H1 (cell line): ENCODE measurements at regions of chr1 and their contacts with region 1.

Region 1: DNA sequence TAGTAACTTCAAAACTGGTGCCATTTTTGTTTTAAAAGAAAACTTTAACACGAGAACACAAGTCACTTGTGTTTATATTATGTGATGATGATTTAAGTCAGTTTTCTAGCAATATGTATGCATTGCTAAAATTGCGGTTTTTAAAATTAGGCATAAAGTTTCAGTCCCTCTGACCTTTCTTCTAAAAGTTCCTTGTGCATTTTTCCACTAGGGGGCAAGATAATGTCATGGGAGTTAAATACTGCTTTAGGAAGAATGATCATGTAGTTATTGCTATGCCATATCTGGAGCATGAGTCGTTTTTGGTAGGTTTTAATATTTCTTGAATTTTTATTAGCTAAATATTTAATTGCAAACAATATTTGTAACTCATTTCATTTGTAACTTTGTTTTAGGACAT is 10.7 kb downstream of the CDC7 start:
- DNase-seq: no peak
- H3K4me3 ChIP-seq: no peak overlapping the region
- H3K27ac ChIP-seq: no peak overlapping the region
- H3K4me1 ChIP-seq: no peaks in the 10 kb centered on the region
- H3K27me3 ChIP-seq: no peaks in the 10 kb centered on the region
- CTCF ChIP-seq: peak in 1 of 3 experiments; percentile 28; a peak in 2 of 4 replicates
- EP300 ChIP-seq: no peak
- POLR2A ChIP-seq: no peak
- RAD21 ChIP-seq: peak; percentile 51 to 61

Region 2: DNA sequence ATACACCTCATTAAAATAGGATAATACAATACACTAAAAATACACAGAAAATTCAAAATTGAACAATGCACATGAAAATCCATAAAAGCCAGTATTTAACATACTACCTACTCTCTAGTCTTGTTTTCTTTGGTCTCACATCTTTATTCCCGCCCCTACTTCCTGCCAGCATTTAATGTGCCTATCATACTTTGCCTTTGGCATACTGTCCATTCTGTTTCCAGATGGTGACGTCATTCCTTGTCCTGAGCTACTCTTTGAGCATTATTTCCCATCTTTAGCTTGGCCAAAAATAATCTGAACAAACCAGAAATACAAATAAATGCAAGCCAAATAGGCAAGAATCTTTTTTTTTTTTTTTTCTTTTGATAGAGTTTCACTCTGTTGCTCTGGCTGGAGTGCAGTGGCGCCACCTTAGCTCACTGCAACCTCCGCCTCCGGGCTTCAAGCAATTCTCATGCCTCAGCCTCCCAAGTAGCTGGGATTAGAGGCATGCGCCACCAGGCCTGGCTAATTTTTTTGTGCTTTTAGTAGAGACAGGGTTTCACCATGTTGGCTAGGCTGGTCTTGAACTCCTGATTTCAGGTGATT is 111.2 kb before region 1 on chr1:
- CTCF ChIA-PET with region 1: no interaction called
- POLR2A ChIA-PET with region 1: no interaction called
- DNase-seq: no peak
- H3K4me3 ChIP-seq: no peak overlapping the region
- H3K27ac ChIP-seq: no peak overlapping the region
- H3K4me1 ChIP-seq: no peaks in the 10 kb centered on the region
- H3K27me3 ChIP-seq: no peaks in the 10 kb centered on the region
- CTCF ChIP-seq: peak; percentile 15 to 24 (median 17); a peak in 2 of 4 replicates
- EP300 ChIP-seq: no peak
- POLR2A ChIP-seq: no peak
- RAD21 ChIP-seq: no peak

Region 3: GRCh38 chr1:91500756-91501522 is 10.4 kb before region 1 on chr1 and contains the start of gene CDC7:
- CTCF ChIA-PET with region 1: interaction called, 6 read pairs
- POLR2A ChIA-PET with region 1: interaction called, 17 read pairs
- DNase-seq: peak; percentile 79 to 94
- H3K4me3 ChIP-seq: peak within 1 kb of the TSS; percentile 67 to 82 (median 76)
- H3K27ac ChIP-seq: peak within 1 kb of the TSS; percentile 99
- H3K4me1 ChIP-seq: peaks cover 2 to 14% (median 7%) of the 10 kb centered on the region in 4 experiments; a peak in 6 of 7 replicates
- H3K27me3 ChIP-seq: no peaks in the 10 kb centered on the region
- CTCF ChIP-seq: peak; percentile 35 to 61 (median 57)
- EP300 ChIP-seq: 0 out of 3 replicates have a peak, but pooled peaks of 1 of the 2 experiments have one; percentile 40
- POLR2A ChIP-seq: peak; percentile 90 to 95
- RAD21 ChIP-seq: peak in 1 of 2 experiments; percentile 54; a peak in 2 of 4 replicates
- total RNA-seq, gene CDC7: 34.4 and 36.4 TPM in 2 replicates

Region 4: GRCh38 chr1:91693557-91693956 is 182.2 kb after region 1 on chr1:
- CTCF ChIA-PET with region 1: no interaction called
- POLR2A ChIA-PET with region 1: no interaction called
- DNase-seq: no peak
- H3K4me3 ChIP-seq: no peak overlapping the region
- H3K27ac ChIP-seq: no peak overlapping the region
- H3K4me1 ChIP-seq: peaks cover 0 to 5% (median 0%) of the 10 kb centered on the region in 4 experiments; a peak in 2 of 7 replicates
- H3K27me3 ChIP-seq: no peaks in the 10 kb centered on the region
- CTCF ChIP-seq: no peak
- EP300 ChIP-seq: no peak
- POLR2A ChIP-seq: no peak
- RAD21 ChIP-seq: no peak

Region 5: GRCh38 chr1:91763252-91763651 is 251.9 kb after region 1 on chr1:
- CTCF ChIA-PET with region 1: interaction called, 16 read pairs
- POLR2A ChIA-PET with region 1: no interaction called
- DNase-seq: no peak
- H3K4me3 ChIP-seq: no peak overlapping the region
- H3K27ac ChIP-seq: no peak overlapping the region
- H3K4me1 ChIP-seq: peaks cover 0 to 3% (median 0%) of the 10 kb centered on the region in 4 experiments; a peak in 1 of 7 replicates
- H3K27me3 ChIP-seq: no peaks in the 10 kb centered on the region
- CTCF ChIP-seq: no peak
- EP300 ChIP-seq: no peak
- POLR2A ChIP-seq: no peak
- RAD21 ChIP-seq: no peak

Region 6: DNA sequence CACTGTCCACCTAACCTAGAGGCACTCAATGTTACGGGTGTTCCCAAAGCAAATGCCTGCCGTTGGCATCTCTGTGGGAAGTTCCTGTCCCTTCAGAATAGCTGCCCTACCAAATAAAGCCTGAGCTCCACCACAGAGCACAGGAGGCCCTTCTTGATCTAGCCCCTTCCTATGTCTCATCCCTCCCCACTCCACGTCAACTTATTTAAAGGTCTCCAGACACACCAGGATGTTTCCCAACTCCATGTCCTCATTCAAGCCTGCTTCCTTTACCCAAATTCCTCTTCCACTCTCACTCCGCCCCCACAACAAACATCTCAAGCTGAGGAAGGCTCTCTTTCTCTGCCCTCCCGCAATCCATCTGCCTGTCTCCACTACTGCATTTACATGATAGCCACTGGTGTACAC is 286.9 kb after region 1 on chr1:
- CTCF ChIA-PET with region 1: interaction called, 11 read pairs
- POLR2A ChIA-PET with region 1: no interaction called
- DNase-seq: no peak
- H3K4me3 ChIP-seq: no peak overlapping the region
- H3K27ac ChIP-seq: no peak overlapping the region
- H3K4me1 ChIP-seq: no peaks in the 10 kb centered on the region
- H3K27me3 ChIP-seq: no peaks in the 10 kb centered on the region
- CTCF ChIP-seq: no peak
- EP300 ChIP-seq: no peak
- POLR2A ChIP-seq: no peak
- RAD21 ChIP-seq: no peak

Region 7: DNA sequence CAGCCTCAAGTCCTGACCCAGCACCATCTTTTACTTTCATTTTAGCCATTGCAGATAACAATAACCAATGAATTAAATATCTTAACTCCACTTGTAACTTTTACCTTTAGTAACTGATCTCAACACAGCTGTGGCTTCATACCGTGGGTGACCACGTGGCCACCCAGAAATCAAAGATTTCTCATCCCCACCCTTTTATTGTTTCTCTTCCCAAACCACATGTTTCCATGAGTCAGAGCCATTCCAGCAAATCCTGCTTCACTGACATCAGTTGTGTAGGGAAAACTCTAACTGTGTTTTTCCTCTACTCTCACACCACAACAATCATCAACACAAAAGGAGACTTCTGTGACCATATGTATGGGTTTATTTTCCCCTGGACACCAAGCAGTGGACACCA is 412.8 kb after region 1 on chr1:
- CTCF ChIA-PET with region 1: interaction called, 40 read pairs
- POLR2A ChIA-PET with region 1: no interaction called
- DNase-seq: no peak
- H3K4me3 ChIP-seq: no peak overlapping the region
- H3K27ac ChIP-seq: no peak overlapping the region
- H3K4me1 ChIP-seq: no peaks in the 10 kb centered on the region
- H3K27me3 ChIP-seq: no peaks in the 10 kb centered on the region
- CTCF ChIP-seq: no peak
- EP300 ChIP-seq: no peak
- POLR2A ChIP-seq: no peak
- RAD21 ChIP-seq: no peak